ENCODE measurements at regions of chr5 and their contacts with region 1.

Region 1: GRCh38 chr5:132820162-132820754 is 7.2 kb downstream of the SOWAHA start:
- DNase-seq: peak; percentile 98
- H3K4me3 ChIP-seq: peak overlapping the region in 1 of 4 donors; percentile 22
- H3K27ac ChIP-seq: no peak overlapping the region
- H3K4me1 ChIP-seq: peaks cover 0 to 25% (median 23%) of the 10 kb centered on the region in 4 donors
- H3K27me3 ChIP-seq: peaks cover 0 to 18% (median 4%) of the 10 kb centered on the region in 4 donors
- CTCF ChIP-seq: peak; percentile 83 to 94 (median 85)
- EP300 ChIP-seq: no peak
- POLR2A ChIP-seq: no peak

Region 2: GRCh38 chr5:132500931-132501630 is 319.2 kb before region 1 on chr5:
- intact Hi-C with region 1: loop called (anchors 10 kb)
- DNase-seq: peak; percentile 92
- H3K4me3 ChIP-seq: no peak overlapping the region
- H3K27ac ChIP-seq: peak overlapping the region; percentile 94 to 98 (median 96)
- H3K4me1 ChIP-seq: peaks cover 38 to 76% (median 57%) of the 10 kb centered on the region in 4 donors
- H3K27me3 ChIP-seq: no peaks in the 10 kb centered on the region
- CTCF ChIP-seq: peak; percentile 83 to 91 (median 87)
- EP300 ChIP-seq: no peak
- POLR2A ChIP-seq: no peak

Region 3: GRCh38 chr5:132777209-132778069 is 42.8 kb before region 1 on chr5 and contains the start of gene SEPTIN8:
- intact Hi-C with region 1: loop called (anchors 5 kb)
- DNase-seq: no peak
- H3K4me3 ChIP-seq: peak within 1 kb of the TSS; percentile 87 to 95 (median 90)
- H3K27ac ChIP-seq: peak within 1 kb of the TSS; percentile 79 to 88 (median 84)
- H3K4me1 ChIP-seq: peaks cover 30 to 54% (median 48%) of the 10 kb centered on the region in 4 donors
- H3K27me3 ChIP-seq: no peaks in the 10 kb centered on the region
- CTCF ChIP-seq: no peak
- EP300 ChIP-seq: no peak
- POLR2A ChIP-seq: no peak
- total RNA-seq, gene SEPTIN8: 26.7 to 42.8 (median 36.9) TPM